CD8-positive, alpha-beta T cell (primary cell): ENCODE measurements at regions of chr11 and their contacts with region 1.

Region 1: DNA sequence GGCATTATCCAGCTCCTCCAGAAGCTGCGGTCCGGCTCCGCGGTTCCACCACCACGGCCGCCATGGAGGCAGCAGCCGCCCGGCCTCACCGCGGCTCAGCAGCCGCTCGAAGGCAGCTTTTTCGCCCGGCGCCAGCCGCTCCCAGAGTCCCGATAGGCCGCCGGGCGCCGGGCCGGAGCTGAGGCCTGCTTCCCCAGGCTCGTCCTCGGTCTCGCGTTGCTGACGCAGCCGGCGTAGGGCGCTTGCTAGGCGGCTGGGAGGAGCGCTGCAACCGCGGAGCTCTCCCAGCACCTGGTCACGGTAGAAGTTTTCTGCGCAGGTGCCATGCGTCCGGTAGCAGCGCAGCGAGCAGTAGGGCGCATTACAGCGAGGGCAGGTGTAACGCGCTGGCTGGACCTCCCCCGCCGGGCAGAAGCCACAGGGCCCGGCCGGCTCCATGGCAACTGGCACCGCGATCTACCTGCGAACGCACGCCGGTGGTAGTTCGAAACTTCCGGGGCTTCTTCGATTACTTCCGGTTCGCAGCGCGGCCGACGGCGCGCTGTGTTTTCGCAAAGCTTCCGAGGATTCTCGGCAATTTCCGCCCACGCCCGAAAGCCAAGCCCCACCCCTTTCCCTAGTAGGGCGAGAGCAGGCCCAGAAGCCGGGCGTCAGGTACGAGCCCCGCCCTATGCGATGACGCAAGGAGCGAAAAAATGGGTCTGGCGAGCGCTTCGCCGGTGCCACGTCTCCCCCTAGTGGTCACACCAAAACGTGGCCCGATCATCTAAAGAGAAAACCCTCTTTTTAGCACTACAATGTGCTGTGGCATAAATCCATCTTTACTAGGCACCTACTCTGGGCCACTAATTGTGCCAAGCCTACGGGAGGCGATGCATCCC is at the start of gene ZNHIT2:
- DNase-seq: peak; percentile 99 to 100 (median 100)
- ATAC-seq: peak; percentile 70
- H3K4me3 ChIP-seq: peak within 1 kb of the TSS; percentile 88
- H3K4me3 Mint-ChIP-seq: peak within 1 kb of the TSS; percentile 88
- H3K27ac ChIP-seq: peak within 1 kb of the TSS; percentile 88 to 95
- H3K27ac Mint-ChIP-seq: peak within 1 kb of the TSS; percentile 96
- H3K4me1 ChIP-seq: peaks cover 49% of the 10 kb centered on the region
- H3K4me1 Mint-ChIP-seq: peaks cover 56% of the 10 kb centered on the region
- H3K27me3 ChIP-seq: no peaks in the 10 kb centered on the region
- H3K27me3 Mint-ChIP-seq: no peaks in the 10 kb centered on the region
- CTCF ChIP-seq: peak; percentile 79
- total RNA-seq, gene ZNHIT2: 8.9 to 9.3 TPM

Region 2: GRCh38 chr11:64778508-64779346 is 338.7 kb before region 1 on chr11 and contains the start of gene SF1:
- CTCF ChIA-PET with region 1: no interaction called
- POLR2A ChIA-PET with region 1: interaction called, 6 read pairs
- intact Hi-C with region 1: loop called (anchors 2 to 10 kb)
- DNase-seq: peak; percentile 97 to 100 (median 99)
- ATAC-seq: peak; percentile 82
- H3K4me3 ChIP-seq: peak within 1 kb of the TSS; percentile 70 to 97
- H3K4me3 Mint-ChIP-seq: peak within 1 kb of the TSS; percentile 93
- H3K27ac ChIP-seq: peak within 1 kb of the TSS; percentile 93 to 98
- H3K27ac Mint-ChIP-seq: peak within 1 kb of the TSS; percentile 99
- H3K4me1 ChIP-seq: peaks cover 53% of the 10 kb centered on the region
- H3K4me1 Mint-ChIP-seq: peaks cover 58% of the 10 kb centered on the region
- H3K27me3 ChIP-seq: no peaks in the 10 kb centered on the region
- H3K27me3 Mint-ChIP-seq: no peaks in the 10 kb centered on the region
- CTCF ChIP-seq: no peak
- total RNA-seq, gene SF1: 1,574 to 1,625 TPM

Region 3: GRCh38 chr11:64924102-64924851 is 193.2 kb before region 1 on chr11 and contains the start of gene PPP2R5B:
- CTCF ChIA-PET with region 1: no interaction called
- POLR2A ChIA-PET with region 1: interaction called, 8 read pairs
- intact Hi-C with region 1: loop called (anchors 1 kb)
- DNase-seq: peak; percentile 78 to 94 (median 90)
- ATAC-seq: peak; percentile 94
- H3K4me3 ChIP-seq: peak within 1 kb of the TSS; percentile 69 to 76
- H3K4me3 Mint-ChIP-seq: peak within 1 kb of the TSS; percentile 95
- H3K27ac ChIP-seq: peak within 1 kb of the TSS; percentile 58 to 92
- H3K27ac Mint-ChIP-seq: peak within 1 kb of the TSS; percentile 96
- H3K4me1 ChIP-seq: peaks cover 19% of the 10 kb centered on the region
- H3K4me1 Mint-ChIP-seq: peaks cover 15% of the 10 kb centered on the region
- H3K27me3 ChIP-seq: no peaks in the 10 kb centered on the region
- H3K27me3 Mint-ChIP-seq: no peaks in the 10 kb centered on the region
- CTCF ChIP-seq: no peak
- total RNA-seq, gene PPP2R5B: 14.8 to 18.0 TPM

Region 4: GRCh38 chr11:64960719-64961118 is 156.7 kb before region 1 on chr11:
- CTCF ChIA-PET with region 1: no interaction called
- POLR2A ChIA-PET with region 1: no interaction called
- intact Hi-C with region 1: no loop called
- DNase-seq: no peak
- ATAC-seq: no peak
- H3K4me3 ChIP-seq: no peak overlapping the region
- H3K4me3 Mint-ChIP-seq: no peak overlapping the region
- H3K27ac ChIP-seq: no peak overlapping the region
- H3K27ac Mint-ChIP-seq: no peak overlapping the region
- H3K4me1 ChIP-seq: no peaks in the 10 kb centered on the region
- H3K4me1 Mint-ChIP-seq: no peaks in the 10 kb centered on the region
- H3K27me3 ChIP-seq: no peaks in the 10 kb centered on the region
- H3K27me3 Mint-ChIP-seq: peaks cover 12% of the 10 kb centered on the region
- CTCF ChIP-seq: no peak

Region 5: GRCh38 chr11:65040847-65041621 is 76.4 kb before region 1 on chr11 and contains the start of gene SAC3D1:
- CTCF ChIA-PET with region 1: interaction called, 3 read pairs
- POLR2A ChIA-PET with region 1: interaction called, 10 read pairs
- intact Hi-C with region 1: loop called in 1 of 2 experiments (anchors 5 kb)
- DNase-seq: peak; percentile 67 to 94 (median 85)
- ATAC-seq: peak; percentile 90
- H3K4me3 ChIP-seq: peak within 1 kb of the TSS; percentile 63 to 76
- H3K4me3 Mint-ChIP-seq: peak within 1 kb of the TSS; percentile 93
- H3K27ac ChIP-seq: peak within 1 kb of the TSS; percentile 34 to 82
- H3K27ac Mint-ChIP-seq: peak within 1 kb of the TSS; percentile 91
- H3K4me1 ChIP-seq: peaks cover 17% of the 10 kb centered on the region
- H3K4me1 Mint-ChIP-seq: peaks cover 15% of the 10 kb centered on the region
- H3K27me3 ChIP-seq: no peaks in the 10 kb centered on the region
- H3K27me3 Mint-ChIP-seq: no peaks in the 10 kb centered on the region
- CTCF ChIP-seq: no peak
- total RNA-seq, gene SAC3D1: 0.57 to 0.94 TPM

Region 6: GRCh38 chr11:65095974-65096806 is 21.3 kb before region 1 on chr11 and contains the start of gene VPS51:
- CTCF ChIA-PET with region 1: interaction called, 69 read pairs
- POLR2A ChIA-PET with region 1: interaction called, 41 read pairs
- intact Hi-C with region 1: loop called (anchors 1 kb)
- DNase-seq: peak; percentile 70 to 95 (median 85)
- ATAC-seq: peak; percentile 84
- H3K4me3 ChIP-seq: peak within 1 kb of the TSS; percentile 80 to 81
- H3K4me3 Mint-ChIP-seq: peak within 1 kb of the TSS; percentile 95
- H3K27ac ChIP-seq: peak within 1 kb of the TSS; percentile 82 to 89
- H3K27ac Mint-ChIP-seq: peak within 1 kb of the TSS; percentile 99
- H3K4me1 ChIP-seq: peaks cover 12% of the 10 kb centered on the region
- H3K4me1 Mint-ChIP-seq: peaks cover 24% of the 10 kb centered on the region
- H3K27me3 ChIP-seq: no peaks in the 10 kb centered on the region
- H3K27me3 Mint-ChIP-seq: no peaks in the 10 kb centered on the region
- CTCF ChIP-seq: no peak
- total RNA-seq, gene VPS51: 221 to 263 TPM

Region 7: DNA sequence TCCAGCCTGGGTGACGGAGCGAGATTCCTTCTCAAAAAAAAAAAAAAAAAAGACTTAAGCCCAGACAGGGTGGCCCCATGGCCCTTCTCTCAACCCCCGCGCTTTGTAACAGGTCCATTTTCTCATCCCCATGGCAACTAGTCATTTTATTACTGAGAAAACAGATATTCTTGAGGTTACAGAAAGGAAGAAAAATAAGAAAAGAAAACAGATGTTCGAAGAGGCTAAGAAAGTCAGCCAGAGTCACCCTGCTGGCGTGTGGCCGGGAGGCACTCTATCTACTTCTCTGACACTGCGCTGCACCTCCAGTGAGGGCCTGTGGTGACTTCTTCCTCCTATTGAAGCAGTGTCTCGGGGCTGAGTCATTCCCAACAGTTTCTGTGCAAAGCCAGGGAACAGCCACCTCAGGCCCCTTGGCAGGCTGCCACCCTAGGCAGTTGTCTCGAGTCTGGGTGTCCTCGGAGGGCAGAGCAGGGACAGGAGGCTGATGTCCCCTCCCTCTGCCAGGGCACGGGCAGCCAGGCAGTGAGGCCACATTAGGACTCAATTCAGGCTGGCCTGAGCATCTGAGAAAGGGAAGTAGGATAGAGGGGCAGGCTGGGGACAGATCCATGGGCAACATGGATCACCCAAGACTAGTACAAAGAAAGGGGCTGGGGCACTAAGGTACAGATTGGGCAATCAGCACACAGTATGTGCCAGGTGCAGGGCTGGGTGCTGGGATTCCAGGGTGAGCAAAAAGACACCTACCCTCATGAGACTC is 33.2 kb after region 1 on chr11:
- CTCF ChIA-PET with region 1: no interaction called
- POLR2A ChIA-PET with region 1: no interaction called
- intact Hi-C with region 1: no loop called
- DNase-seq: peak in 1 of 9 experiments; percentile 41
- ATAC-seq: no peak
- H3K4me3 ChIP-seq: no peak overlapping the region
- H3K4me3 Mint-ChIP-seq: no peak overlapping the region
- H3K27ac ChIP-seq: no peak overlapping the region
- H3K27ac Mint-ChIP-seq: no peak overlapping the region
- H3K4me1 ChIP-seq: no peaks in the 10 kb centered on the region
- H3K4me1 Mint-ChIP-seq: no peaks in the 10 kb centered on the region
- H3K27me3 ChIP-seq: no peaks in the 10 kb centered on the region
- H3K27me3 Mint-ChIP-seq: peaks cover 5% of the 10 kb centered on the region
- CTCF ChIP-seq: no peak

Region 8: DNA sequence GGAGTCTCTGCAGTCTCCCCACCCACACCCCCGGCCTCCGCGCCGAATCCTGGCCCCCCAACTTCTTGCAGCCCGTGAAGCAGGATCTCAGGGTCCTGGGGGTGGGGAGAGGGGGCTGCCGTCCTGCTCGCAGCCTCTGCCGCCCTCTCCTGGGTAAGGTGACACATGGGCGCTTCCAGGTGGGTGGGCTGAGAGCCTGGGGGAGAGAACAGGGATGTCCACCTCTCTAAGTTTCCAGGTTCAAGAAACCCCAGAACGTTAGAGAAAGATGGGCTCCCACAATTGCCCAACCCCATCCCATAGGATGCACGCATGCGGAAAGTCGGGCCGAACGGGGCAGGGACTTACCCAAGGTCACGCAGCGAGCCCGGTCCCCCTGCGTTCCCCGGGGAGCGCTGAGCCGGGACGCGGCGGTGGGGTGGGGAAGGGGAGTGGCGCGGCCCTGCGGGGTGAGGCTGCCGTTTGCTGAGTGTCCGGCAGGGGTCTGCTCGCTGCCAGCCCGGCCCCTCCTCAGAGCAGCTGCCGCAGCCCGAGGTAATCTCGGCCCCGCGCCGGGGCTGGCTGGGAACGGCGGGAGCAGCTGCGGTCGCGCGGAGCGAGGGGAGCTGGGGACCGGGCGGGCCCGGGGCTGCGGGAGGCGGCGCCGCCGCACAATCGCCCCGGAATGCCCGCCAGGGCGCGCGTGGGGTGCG is 63.6 kb after region 1 on chr11:
- CTCF ChIA-PET with region 1: no interaction called
- POLR2A ChIA-PET with region 1: interaction called, 12 read pairs
- intact Hi-C with region 1: loop called in 1 of 2 experiments (anchors 1 kb)
- DNase-seq: peak; percentile 17 to 73 (median 53)
- ATAC-seq: peak; percentile 68
- H3K4me3 ChIP-seq: peak overlapping the region; percentile 85 to 95
- H3K4me3 Mint-ChIP-seq: peak overlapping the region; percentile 91
- H3K27ac ChIP-seq: peak overlapping the region in 1 of 2 experiments; percentile 23
- H3K27ac Mint-ChIP-seq: peak overlapping the region; percentile 80
- H3K4me1 ChIP-seq: peaks cover 24% of the 10 kb centered on the region
- H3K4me1 Mint-ChIP-seq: peaks cover 28% of the 10 kb centered on the region
- H3K27me3 ChIP-seq: no peaks in the 10 kb centered on the region
- H3K27me3 Mint-ChIP-seq: no peaks in the 10 kb centered on the region
- CTCF ChIP-seq: peak; percentile 57

Region 9: DNA sequence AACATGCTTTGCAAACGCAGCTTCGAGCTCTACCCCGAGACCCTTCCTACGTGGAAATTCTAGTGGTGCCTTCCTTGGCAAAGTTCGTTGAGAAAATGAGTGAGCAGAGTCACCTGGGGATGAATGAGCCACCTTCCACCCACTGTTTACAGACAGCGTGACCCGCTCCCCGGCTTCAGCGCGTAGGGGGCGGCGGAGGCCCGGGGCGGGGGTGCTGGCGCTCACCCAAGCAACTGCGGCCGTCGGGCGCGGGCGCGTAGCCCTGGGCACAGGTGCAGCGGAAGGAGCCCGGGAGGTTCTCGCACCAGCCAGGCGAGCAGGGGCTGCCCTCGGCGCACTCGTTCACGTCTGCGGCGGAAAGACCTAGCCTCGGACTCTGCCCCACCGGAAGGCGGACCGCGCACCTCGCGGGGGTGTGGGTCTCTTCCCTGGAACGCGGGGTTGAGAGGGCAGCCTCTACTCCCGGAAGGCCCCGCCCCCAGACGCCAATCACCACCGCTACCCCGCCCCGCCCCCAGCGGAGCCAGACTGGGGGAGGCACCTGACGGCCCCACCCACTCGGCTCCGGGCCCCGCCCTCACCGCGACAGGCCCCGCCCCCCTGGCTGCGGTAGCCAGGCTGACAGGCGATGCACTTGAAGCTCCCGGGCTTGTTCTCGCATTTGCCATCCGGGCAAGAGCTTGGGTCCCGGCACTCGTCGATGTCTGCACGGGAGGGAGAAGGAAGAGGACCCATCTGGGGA is 428.9 kb after region 1 on chr11:
- CTCF ChIA-PET with region 1: no interaction called
- POLR2A ChIA-PET with region 1: no interaction called
- intact Hi-C with region 1: no loop called
- DNase-seq: peak; percentile 96 to 100 (median 98)
- ATAC-seq: peak; percentile 89
- H3K4me3 ChIP-seq: peak overlapping the region; percentile 49 to 50
- H3K4me3 Mint-ChIP-seq: peak overlapping the region; percentile 82
- H3K27ac ChIP-seq: peak overlapping the region; percentile 62 to 74
- H3K27ac Mint-ChIP-seq: peak overlapping the region; percentile 95
- H3K4me1 ChIP-seq: peaks cover 39% of the 10 kb centered on the region
- H3K4me1 Mint-ChIP-seq: peaks cover 48% of the 10 kb centered on the region
- H3K27me3 ChIP-seq: no peaks in the 10 kb centered on the region
- H3K27me3 Mint-ChIP-seq: no peaks in the 10 kb centered on the region
- CTCF ChIP-seq: no peak